ENCODE measurements at regions of chr16 and their contacts with region 1.

Region 1: DNA sequence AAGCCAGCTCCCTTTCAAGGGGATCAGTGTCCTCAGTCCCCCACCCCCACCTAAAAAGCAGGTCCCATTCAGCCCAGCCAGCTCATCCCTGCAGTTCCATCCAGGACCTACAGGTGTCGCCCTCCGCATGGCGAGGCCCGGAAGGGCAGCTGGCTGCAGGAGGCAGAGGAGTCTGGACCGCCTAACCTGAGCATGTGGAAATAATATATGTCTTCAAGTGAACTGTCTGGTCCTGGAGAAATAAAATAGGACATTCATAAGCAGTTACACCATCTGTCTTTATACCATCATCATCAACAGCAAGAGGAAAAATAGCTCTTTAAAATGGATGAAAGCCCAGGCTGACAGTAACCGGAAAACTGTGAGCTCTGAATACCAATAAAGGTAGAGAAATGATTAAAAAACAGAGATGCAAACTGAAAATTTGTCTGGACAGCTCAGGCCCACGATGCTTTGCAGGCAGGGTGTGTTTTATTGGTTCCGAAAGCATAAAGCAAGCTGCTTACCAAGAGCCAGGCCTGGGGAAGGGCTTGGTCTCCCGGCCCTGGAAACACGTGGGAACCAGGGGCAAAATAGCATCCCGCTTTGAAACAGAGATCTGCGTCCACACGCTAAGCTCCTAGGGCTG is 215.2 kb downstream of the ZFHX3 start:
- DNase-seq: peak; percentile 25 to 72 (median 51)
- ATAC-seq: no peak
- H3K4me3 ChIP-seq: no peak overlapping the region
- H3K4me3 Mint-ChIP-seq: no peak overlapping the region
- H3K27ac ChIP-seq: no peak overlapping the region
- H3K27ac Mint-ChIP-seq: no peak overlapping the region
- H3K4me1 ChIP-seq: no peaks in the 10 kb centered on the region
- H3K4me1 Mint-ChIP-seq: no peaks in the 10 kb centered on the region
- H3K27me3 ChIP-seq: no peaks in the 10 kb centered on the region
- H3K27me3 Mint-ChIP-seq: no peaks in the 10 kb centered on the region
- CTCF ChIP-seq: peak; percentile 81

Region 2: DNA sequence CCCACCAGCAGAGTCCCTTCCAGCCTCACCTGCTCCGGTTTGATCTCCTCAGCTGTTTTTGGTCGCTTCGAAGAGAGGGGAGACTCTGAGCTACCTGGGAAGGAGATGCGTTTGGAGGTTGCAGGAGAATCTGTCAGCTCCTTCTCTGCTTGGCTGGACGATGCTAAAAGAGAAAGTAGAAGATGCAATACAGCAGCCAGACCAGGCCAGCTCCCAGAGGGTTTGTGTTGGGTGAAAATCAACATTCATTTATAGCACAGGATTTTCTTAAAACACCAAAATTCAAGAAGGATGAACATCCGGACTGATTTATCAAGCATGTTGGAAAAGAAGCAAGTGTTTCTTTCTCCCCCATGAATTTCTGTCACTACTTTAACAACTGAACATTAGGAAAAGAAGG is 20.9 kb before region 1 on chr16:
- CTCF ChIA-PET with region 1: no interaction called
- POLR2A ChIA-PET with region 1: no interaction called
- intact Hi-C with region 1: no loop called
- DNase-seq: no peak
- ATAC-seq: no peak
- H3K4me3 ChIP-seq: no peak overlapping the region
- H3K4me3 Mint-ChIP-seq: no peak overlapping the region
- H3K27ac ChIP-seq: no peak overlapping the region
- H3K27ac Mint-ChIP-seq: no peak overlapping the region
- H3K4me1 ChIP-seq: no peaks in the 10 kb centered on the region
- H3K4me1 Mint-ChIP-seq: no peaks in the 10 kb centered on the region
- H3K27me3 ChIP-seq: no peaks in the 10 kb centered on the region
- H3K27me3 Mint-ChIP-seq: no peaks in the 10 kb centered on the region
- CTCF ChIP-seq: no peak

Region 3: DNA sequence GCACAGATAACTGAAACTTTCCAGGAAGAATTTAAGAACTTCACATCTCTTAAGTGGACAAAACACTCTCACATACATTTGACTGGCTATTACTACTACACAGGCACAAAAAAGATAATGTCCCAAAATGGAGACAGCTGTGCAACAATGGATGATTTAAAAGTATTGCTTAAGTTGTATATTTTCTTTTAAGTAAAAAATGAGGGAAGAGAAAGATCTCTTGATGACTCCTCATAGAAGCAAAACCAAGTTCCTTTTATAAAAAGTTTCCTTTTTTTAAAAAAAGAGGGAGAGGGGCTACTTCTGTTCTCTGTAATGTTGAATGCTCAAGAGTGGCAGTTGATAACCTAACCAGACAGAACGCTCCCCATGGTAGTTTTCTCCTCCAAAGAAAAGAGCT is 19.7 kb after region 1 on chr16:
- CTCF ChIA-PET with region 1: no interaction called
- POLR2A ChIA-PET with region 1: no interaction called
- intact Hi-C with region 1: no loop called
- DNase-seq: no peak
- ATAC-seq: no peak
- H3K4me3 ChIP-seq: no peak overlapping the region
- H3K4me3 Mint-ChIP-seq: no peak overlapping the region
- H3K27ac ChIP-seq: no peak overlapping the region
- H3K27ac Mint-ChIP-seq: no peak overlapping the region
- H3K4me1 ChIP-seq: no peaks in the 10 kb centered on the region
- H3K4me1 Mint-ChIP-seq: no peaks in the 10 kb centered on the region
- H3K27me3 ChIP-seq: no peaks in the 10 kb centered on the region
- H3K27me3 Mint-ChIP-seq: no peaks in the 10 kb centered on the region
- CTCF ChIP-seq: no peak

Region 4: GRCh38 chr16:72873044-72873443 is 40.3 kb after region 1 on chr16:
- CTCF ChIA-PET with region 1: no interaction called
- POLR2A ChIA-PET with region 1: no interaction called
- intact Hi-C with region 1: no loop called
- DNase-seq: no peak
- ATAC-seq: no peak
- H3K4me3 ChIP-seq: no peak overlapping the region
- H3K4me3 Mint-ChIP-seq: no peak overlapping the region
- H3K27ac ChIP-seq: no peak overlapping the region
- H3K27ac Mint-ChIP-seq: no peak overlapping the region
- H3K4me1 ChIP-seq: peaks cover 4% of the 10 kb centered on the region
- H3K4me1 Mint-ChIP-seq: no peaks in the 10 kb centered on the region
- H3K27me3 ChIP-seq: peaks cover 0 to 1% of the 10 kb centered on the region in 2 experiments
- H3K27me3 Mint-ChIP-seq: no peaks in the 10 kb centered on the region
- CTCF ChIP-seq: no peak

Region 5: DNA sequence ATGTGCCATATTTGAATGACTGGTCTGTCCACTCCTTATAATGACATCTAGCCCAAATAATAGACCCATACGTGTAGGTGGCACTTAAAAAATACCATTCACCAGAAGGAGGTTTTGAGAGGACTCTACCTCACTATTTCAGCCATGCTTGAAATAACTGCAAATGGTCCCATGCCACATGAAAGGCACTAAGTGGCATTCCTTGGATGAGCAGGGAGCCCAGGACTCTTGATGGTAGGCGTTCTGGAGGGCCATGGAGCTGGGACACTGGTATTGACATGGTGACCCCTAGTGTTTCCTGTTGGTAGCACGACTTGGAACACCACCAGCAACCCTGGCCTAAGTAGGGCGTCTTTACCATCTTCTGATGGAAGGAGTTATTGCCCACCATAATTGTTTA is 363.9 kb after region 1 on chr16:
- CTCF ChIA-PET with region 1: no interaction called
- POLR2A ChIA-PET with region 1: no interaction called
- intact Hi-C with region 1: loop called in 1 of 2 experiments (anchors 5 kb)
- DNase-seq: peak in 4 of 14 experiments; percentile 23 to 57 (median 42)
- ATAC-seq: no peak
- H3K4me3 ChIP-seq: no peak overlapping the region
- H3K4me3 Mint-ChIP-seq: no peak overlapping the region
- H3K27ac ChIP-seq: no peak overlapping the region
- H3K27ac Mint-ChIP-seq: no peak overlapping the region
- H3K4me1 ChIP-seq: no peaks in the 10 kb centered on the region
- H3K4me1 Mint-ChIP-seq: no peaks in the 10 kb centered on the region
- H3K27me3 ChIP-seq: no peaks in the 10 kb centered on the region
- H3K27me3 Mint-ChIP-seq: no peaks in the 10 kb centered on the region
- CTCF ChIP-seq: no peak

Region 6: DNA sequence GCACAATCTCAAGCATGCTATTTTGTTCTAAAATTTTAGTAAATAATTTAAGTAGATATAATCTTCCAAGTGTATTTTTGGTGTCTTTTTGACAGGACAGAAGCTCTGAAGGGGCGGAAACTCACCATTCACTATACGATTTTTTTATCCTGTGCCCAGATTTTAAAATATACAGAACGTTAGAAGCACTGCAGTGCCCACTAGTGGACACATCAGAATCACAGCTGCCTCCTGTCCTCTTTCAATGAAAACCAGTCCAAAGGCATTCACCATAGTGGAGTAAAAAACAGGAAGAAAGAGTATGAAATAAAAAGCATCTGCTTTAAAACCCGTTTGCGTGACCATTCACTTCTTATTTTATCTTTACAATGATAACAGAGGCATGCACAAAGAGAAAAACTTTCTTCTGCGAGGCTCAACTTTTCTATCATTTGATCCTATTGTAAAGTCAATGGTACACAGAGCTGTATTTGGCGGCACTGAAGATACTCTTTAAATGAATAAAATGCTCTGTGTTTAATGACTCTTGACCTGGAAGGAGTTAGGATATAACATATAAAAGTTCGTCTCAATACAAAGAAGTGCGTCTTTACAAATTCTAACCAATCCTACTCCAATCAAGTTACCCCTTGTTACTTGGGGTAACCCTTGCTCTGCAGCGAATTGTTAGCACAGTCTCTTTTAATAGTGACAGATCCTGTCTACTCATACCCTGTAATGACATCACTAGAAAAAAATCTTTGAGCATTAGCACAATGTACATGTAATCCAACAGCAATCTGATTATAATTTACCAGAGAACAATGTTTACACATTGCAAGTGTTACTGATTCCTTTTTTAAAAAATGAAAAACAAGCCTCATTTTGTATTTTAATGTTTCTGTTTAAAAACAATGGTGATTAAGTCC is 1124.1 kb after region 1 on chr16:
- CTCF ChIA-PET with region 1: no interaction called
- POLR2A ChIA-PET with region 1: no interaction called
- intact Hi-C with region 1: loop called in 1 of 2 experiments (anchors 2 kb)
- DNase-seq: peak in 5 of 14 experiments; percentile 8 to 47 (median 25)
- ATAC-seq: no peak
- H3K4me3 ChIP-seq: no peak overlapping the region
- H3K4me3 Mint-ChIP-seq: no peak overlapping the region
- H3K27ac ChIP-seq: no peak overlapping the region
- H3K27ac Mint-ChIP-seq: no peak overlapping the region
- H3K4me1 ChIP-seq: no peaks in the 10 kb centered on the region
- H3K4me1 Mint-ChIP-seq: no peaks in the 10 kb centered on the region
- H3K27me3 ChIP-seq: no peaks in the 10 kb centered on the region
- H3K27me3 Mint-ChIP-seq: peaks cover 5% of the 10 kb centered on the region
- CTCF ChIP-seq: peak; percentile 58

Measured in CD4-positive, alpha-beta T cell (primary cell).